Activated CD4-positive, alpha-beta T cell treated with anti-CD3 and anti-CD28 coated beads, Interleukin-2, amount 10 ng/mL, durations not matched to agents 7 days and 5 days (primary cell): ENCODE measurements at regions of chr11 and their contacts with region 1.

Region 1: DNA sequence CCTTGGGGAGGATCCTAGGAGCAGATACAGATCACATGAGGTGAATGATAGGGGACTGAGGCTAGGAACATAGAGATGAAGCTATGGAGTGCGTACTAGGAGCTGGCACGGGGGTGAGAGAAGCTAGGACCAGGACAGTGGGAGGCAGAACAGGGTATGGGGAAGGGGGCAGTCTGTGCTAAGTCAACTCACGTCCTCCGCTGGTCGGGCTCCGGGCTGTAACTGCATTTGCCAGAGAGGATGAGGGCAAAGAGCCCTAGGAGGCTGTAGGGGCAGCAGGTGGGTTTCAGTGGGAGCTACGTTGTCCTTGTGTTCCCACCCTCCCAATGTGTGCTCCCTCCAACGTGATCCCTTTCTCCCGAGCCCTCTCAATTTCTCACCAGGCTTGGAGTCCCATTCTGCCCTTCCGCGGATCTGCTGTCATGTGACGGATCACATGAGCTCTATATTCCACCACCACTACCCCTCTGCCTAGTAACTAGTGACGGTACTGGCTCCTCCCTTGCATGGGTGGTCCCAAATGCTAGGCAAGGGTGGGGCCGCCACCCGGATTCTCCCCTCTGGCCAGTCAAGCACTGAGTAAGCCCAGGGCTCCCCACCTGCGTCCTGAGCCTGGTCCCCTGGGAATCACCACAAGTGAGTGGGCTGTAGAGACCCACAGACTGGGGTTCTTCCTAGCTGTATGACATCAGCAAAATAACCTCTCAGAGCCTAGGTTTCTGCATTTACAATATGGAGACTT is at the start of gene TPP1:
- DNase-seq: peak; percentile 94
- H3K4me3 Mint-ChIP-seq: no peak within 1 kb of the TSS
- H3K27ac Mint-ChIP-seq: no peak within 1 kb of the TSS
- H3K4me1 Mint-ChIP-seq: peaks cover 7% of the 10 kb centered on the region
- H3K27me3 Mint-ChIP-seq: no peaks in the 10 kb centered on the region
- total RNA-seq, gene TPP1: 90.1 to 105 TPM

Region 2: GRCh38 chr11:6603287-6604080 is 15.7 kb before region 1 on chr11 and contains the starts of genes ILK and RRP8:
- CTCF ChIA-PET with region 1: interaction called, 10 read pairs
- POLR2A ChIA-PET with region 1: no interaction called
- DNase-seq: peak; percentile 89
- H3K4me3 Mint-ChIP-seq: no peak within 1 kb of the TSS
- H3K27ac Mint-ChIP-seq: no peak within 1 kb of the TSS
- H3K4me1 Mint-ChIP-seq: peaks cover 18% of the 10 kb centered on the region
- H3K27me3 Mint-ChIP-seq: no peaks in the 10 kb centered on the region
- total RNA-seq, gene ILK: 155 to 163 TPM
- total RNA-seq, gene RRP8: 23.0 to 27.1 TPM

Region 3: DNA sequence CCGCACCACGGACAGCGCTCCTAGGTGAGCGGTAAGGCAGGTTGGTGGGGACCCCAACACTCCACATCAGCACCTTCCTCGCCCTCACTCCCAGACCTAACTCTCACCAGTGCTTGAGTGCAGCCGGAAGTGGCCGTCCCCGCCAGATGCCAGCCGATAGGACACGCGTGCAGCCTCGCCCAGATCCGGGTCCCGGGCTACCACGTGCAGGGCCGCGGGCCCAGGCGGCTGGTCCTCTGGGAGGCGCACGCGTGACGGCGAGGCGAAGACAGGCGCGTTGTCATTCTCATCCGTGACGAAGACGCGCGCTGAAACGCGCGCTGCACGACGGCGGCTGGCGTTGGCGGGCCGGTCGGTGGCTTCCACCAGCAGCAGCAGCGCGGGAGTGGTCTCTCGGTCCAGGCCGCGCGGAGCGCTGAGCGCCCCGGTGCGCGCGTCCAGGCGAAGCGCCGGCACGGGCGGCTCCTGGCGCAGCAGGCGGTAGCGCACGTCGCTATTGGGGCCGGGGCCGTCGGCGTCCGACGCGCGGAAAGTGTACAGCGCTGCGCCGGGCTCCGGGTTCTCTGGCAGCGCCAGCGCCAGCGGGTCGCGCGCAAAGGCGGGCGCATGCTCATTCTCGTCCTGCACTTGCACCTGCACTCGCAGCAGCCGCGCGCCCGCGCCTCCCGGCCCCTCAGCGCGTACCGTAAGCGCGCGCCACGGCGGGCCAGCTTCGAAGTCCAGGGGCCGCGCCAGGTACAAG is 10.9 kb after region 1 on chr11:
- CTCF ChIA-PET with region 1: interaction called, 11 read pairs
- POLR2A ChIA-PET with region 1: interaction called, 3 read pairs
- DNase-seq: no peak
- H3K4me3 Mint-ChIP-seq: no peak overlapping the region
- H3K27ac Mint-ChIP-seq: no peak overlapping the region
- H3K4me1 Mint-ChIP-seq: peaks cover 27% of the 10 kb centered on the region
- H3K27me3 Mint-ChIP-seq: no peaks in the 10 kb centered on the region

Region 4: GRCh38 chr11:6648501-6648900 is 29.3 kb after region 1 on chr11:
- CTCF ChIA-PET with region 1: interaction called, 10 read pairs
- POLR2A ChIA-PET with region 1: no interaction called
- DNase-seq: no peak
- H3K4me3 Mint-ChIP-seq: no peak overlapping the region
- H3K27ac Mint-ChIP-seq: no peak overlapping the region
- H3K4me1 Mint-ChIP-seq: no peaks in the 10 kb centered on the region
- H3K27me3 Mint-ChIP-seq: no peaks in the 10 kb centered on the region